ENCODE measurements at regions of chr3 and their contacts with region 1.

Region 1: DNA sequence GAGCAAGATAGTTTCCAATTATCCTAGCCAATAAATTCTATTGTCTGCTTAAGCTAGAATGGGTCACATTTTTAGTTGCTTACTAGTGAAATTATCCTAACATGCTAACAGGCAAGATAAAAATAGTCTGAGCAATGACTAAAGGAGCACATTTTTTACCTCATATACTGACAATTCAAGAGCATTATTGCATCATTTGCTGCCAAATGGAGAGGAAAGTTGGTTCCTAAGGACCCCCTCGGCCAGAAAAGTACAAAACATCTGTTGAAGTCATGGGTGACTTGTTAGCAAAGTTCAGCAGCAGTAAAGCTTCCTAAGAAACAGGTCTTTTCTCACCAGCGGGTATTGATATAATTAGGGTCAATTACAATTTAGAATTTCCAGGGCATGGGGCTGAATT is 1001.0 kb downstream of the FHIT start:
- DNase-seq: no peak
- ATAC-seq: peak; percentile 42
- H3K4me3 ChIP-seq: no peak overlapping the region
- H3K27ac ChIP-seq: peak overlapping the region; percentile 46; the same call in 2 of the 3 replicates
- H3K4me1 ChIP-seq: peaks cover 0 to 42% of the 10 kb centered on the region in 2 experiments; a peak in 3 of 5 replicates
- H3K27me3 ChIP-seq: no peaks in the 10 kb centered on the region
- CTCF ChIP-seq: no peak
- EP300 ChIP-seq: no peak
- POLR2A ChIP-seq: no peak
- RAD21 ChIP-seq: no peak

Region 2: GRCh38 chr3:60202052-60202726 is 48.0 kb before region 1 on chr3:
- CTCF ChIA-PET with region 1: no interaction called
- POLR2A ChIA-PET with region 1: no interaction called
- in situ Hi-C with region 1: no loop called
- intact Hi-C with region 1: no loop called
- DNase-seq: no peak
- ATAC-seq: no peak
- H3K4me3 ChIP-seq: no peak overlapping the region
- H3K27ac ChIP-seq: no peak overlapping the region
- H3K4me1 ChIP-seq: no peaks in the 10 kb centered on the region
- H3K27me3 ChIP-seq: no peaks in the 10 kb centered on the region
- CTCF ChIP-seq: no peak
- EP300 ChIP-seq: no peak
- POLR2A ChIP-seq: no peak
- RAD21 ChIP-seq: no peak

Region 3: DNA sequence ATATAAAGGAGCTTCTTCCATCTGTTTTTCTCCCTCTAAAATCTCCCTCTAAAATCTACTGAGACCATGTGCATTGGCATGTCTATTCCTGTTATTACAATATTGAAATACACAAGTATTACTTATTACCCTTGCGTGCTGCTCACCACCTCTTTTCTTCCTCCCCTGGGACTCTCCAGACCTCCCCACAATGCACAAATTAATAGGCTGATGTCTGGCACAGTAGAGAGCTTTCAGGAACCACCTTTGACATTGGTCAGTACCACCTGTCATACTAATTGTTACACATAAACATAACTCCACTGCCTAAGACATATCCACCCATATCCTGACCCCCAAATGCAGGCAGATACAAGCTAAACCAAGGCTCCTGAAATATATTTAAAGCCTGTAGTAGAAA is 278.4 kb after region 1 on chr3:
- CTCF ChIA-PET with region 1: no interaction called
- POLR2A ChIA-PET with region 1: no interaction called
- in situ Hi-C with region 1: no loop called
- intact Hi-C with region 1: loop called (anchors 2 kb)
- DNase-seq: no peak
- ATAC-seq: no peak
- H3K4me3 ChIP-seq: no peak overlapping the region
- H3K27ac ChIP-seq: no peak overlapping the region
- H3K4me1 ChIP-seq: no peaks in the 10 kb centered on the region
- H3K27me3 ChIP-seq: no peaks in the 10 kb centered on the region
- CTCF ChIP-seq: no peak
- EP300 ChIP-seq: no peak
- POLR2A ChIP-seq: no peak
- RAD21 ChIP-seq: no peak

Measured in K562 (cell line).